Activated CD4-positive, alpha-beta T cell treated with anti-CD3 and anti-CD28 coated beads for 36 hours (primary cell): ENCODE measurements at regions of chr2 and their contacts with region 1.

Region 1: GRCh38 chr2:26345545-26346453 is at the start of gene SELENOI:
- DNase-seq: peak; percentile 100
- ATAC-seq: peak; percentile 94
- H3K4me3 Mint-ChIP-seq: peak within 1 kb of the TSS; percentile 91
- H3K27ac Mint-ChIP-seq: peak within 1 kb of the TSS; percentile 98
- H3K4me1 Mint-ChIP-seq: peaks cover 36% of the 10 kb centered on the region
- H3K27me3 Mint-ChIP-seq: no peaks in the 10 kb centered on the region
- total RNA-seq, gene SELENOI: 26.5 to 42.3 TPM

Region 2: DNA sequence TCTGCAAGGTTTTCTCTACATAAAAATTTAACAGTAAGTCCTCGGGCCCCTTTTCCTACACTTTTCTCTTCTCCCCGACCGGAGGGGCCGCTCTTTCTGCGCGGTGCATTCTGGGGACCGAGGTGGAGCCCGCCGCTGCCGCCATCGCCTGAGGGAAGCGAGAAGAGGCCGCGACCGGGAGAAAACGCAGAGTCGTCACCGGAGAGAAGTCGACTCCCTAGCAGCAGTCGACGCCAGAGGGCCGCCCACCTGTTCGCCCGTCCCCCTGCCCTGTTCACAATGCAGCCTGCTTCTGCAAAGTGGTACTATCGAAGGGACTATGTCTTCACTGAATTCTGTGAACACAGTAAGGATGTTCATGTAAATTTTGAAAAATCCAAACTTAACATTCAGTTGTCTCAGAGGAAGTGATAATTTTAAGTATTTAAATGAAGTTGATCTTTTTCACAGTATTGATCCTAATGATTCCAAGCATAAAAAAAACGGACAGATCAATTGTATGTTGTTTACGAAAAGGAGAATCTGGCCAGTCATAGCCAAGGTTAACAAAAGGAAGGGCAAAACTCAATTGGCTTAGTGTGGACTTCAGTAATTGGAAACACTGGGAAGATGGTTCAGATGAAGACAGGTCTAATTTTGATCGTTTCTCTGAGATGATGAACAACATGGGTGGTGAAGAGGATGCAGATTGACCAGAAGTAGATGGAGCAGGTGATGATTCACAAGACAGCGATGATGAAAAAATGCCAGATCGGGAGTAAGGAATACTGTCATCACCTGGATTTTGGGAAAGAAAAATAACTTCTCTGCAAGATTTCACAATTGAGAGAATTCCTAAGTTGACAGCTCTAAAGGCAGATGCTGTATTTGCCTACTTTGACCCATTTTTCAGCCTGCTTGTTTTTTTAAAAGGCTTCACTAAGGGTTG is 523.3 kb before region 1 on chr2:
- CTCF ChIA-PET with region 1: no interaction called
- POLR2A ChIA-PET with region 1: no interaction called
- intact Hi-C with region 1: loop called in 1 of 2 experiments (anchors 1 kb)
- DNase-seq: peak; percentile 82
- ATAC-seq: peak; percentile 34
- H3K4me3 Mint-ChIP-seq: peak overlapping the region; percentile 72
- H3K27ac Mint-ChIP-seq: peak overlapping the region; percentile 79
- H3K4me1 Mint-ChIP-seq: peaks cover 69% of the 10 kb centered on the region
- H3K27me3 Mint-ChIP-seq: no peaks in the 10 kb centered on the region

Region 3: GRCh38 chr2:26033818-26034636 is 311.8 kb before region 1 on chr2 and contains the start of gene RAB10:
- CTCF ChIA-PET with region 1: no interaction called
- POLR2A ChIA-PET with region 1: interaction called, 3 read pairs
- intact Hi-C with region 1: loop called (anchors 1 to 5 kb)
- DNase-seq: peak; percentile 99
- ATAC-seq: peak; percentile 95
- H3K4me3 Mint-ChIP-seq: peak within 1 kb of the TSS; percentile 98
- H3K27ac Mint-ChIP-seq: peak within 1 kb of the TSS; percentile 90
- H3K4me1 Mint-ChIP-seq: peaks cover 28% of the 10 kb centered on the region
- H3K27me3 Mint-ChIP-seq: no peaks in the 10 kb centered on the region
- total RNA-seq, gene RAB10: 103 to 160 TPM

Region 4: DNA sequence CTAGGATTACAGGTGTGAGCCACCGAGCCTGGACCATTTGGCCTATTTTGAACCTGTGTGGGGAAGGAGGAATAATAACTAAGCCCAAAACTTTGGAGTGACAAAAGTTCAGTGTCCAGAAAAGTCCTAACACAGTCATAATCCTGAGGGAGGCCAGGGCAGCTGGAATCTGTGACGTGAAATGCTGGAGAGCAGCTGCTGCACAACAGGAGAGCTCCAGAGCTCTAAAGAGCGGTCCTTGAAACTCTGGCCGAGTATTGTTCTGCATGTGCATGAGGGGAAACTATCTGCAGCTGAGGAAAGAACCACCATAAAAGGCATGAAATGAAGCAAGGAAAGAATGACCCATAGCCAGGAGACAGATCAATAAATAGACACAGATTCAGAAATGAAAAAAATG is 129.2 kb before region 1 on chr2:
- CTCF ChIA-PET with region 1: no interaction called
- POLR2A ChIA-PET with region 1: no interaction called
- intact Hi-C with region 1: no loop called
- DNase-seq: no peak
- ATAC-seq: no peak
- H3K4me3 Mint-ChIP-seq: no peak overlapping the region
- H3K27ac Mint-ChIP-seq: no peak overlapping the region
- H3K4me1 Mint-ChIP-seq: no peaks in the 10 kb centered on the region
- H3K27me3 Mint-ChIP-seq: no peaks in the 10 kb centered on the region

Region 5: GRCh38 chr2:26299471-26300101 is 46.2 kb before region 1 on chr2:
- CTCF ChIA-PET with region 1: no interaction called
- POLR2A ChIA-PET with region 1: interaction called, 4 read pairs
- intact Hi-C with region 1: loop called in 1 of 2 experiments (anchors 1 kb)
- DNase-seq: peak; percentile 51
- ATAC-seq: peak; percentile 56
- H3K4me3 Mint-ChIP-seq: no peak overlapping the region
- H3K27ac Mint-ChIP-seq: no peak overlapping the region
- H3K4me1 Mint-ChIP-seq: no peaks in the 10 kb centered on the region
- H3K27me3 Mint-ChIP-seq: no peaks in the 10 kb centered on the region

Region 6: DNA sequence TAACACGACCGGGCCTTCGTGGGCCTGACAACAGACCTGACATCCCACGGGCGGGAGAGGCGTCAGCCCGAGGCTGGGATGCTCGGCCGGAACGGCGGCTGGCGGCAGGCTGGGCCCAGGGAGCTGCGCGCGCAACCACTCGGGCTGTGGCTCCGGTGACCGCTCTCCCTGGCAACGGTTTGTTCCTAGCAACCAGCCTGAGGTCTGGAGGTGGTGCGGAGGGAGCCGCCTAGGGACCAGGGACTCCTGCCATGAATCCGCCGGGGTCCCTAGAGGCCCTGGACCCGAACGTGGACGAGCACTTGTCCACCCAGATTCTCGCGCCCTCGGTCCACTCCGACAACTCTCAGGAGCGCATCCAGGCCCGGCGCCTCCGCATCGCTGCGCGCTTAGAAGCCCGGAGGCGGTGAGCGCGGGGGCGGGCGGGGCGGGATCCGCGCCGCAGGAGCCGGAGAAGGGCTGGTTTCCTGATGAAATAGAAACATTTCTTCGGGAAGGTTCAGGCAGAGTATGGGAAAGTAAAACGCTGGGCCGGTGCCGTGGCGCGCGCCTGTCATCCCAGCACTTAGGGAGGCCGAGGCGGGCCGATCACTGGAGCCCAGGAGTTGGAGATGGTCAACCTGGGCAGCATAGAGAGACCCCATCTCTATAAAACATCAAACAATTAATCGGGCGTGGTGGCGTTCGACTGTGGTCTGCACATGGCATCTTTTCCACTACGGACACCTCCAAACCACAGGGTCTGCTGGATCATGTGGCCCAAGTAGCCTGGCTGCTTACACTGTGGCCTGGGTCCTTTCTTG is 56.1 kb after region 1 on chr2 and contains the start of gene DRC1:
- CTCF ChIA-PET with region 1: no interaction called
- POLR2A ChIA-PET with region 1: no interaction called
- intact Hi-C with region 1: no loop called
- DNase-seq: peak; percentile 64
- ATAC-seq: peak; percentile 62
- H3K4me3 Mint-ChIP-seq: no peak within 1 kb of the TSS
- H3K27ac Mint-ChIP-seq: no peak within 1 kb of the TSS
- H3K4me1 Mint-ChIP-seq: peaks cover 8% of the 10 kb centered on the region
- H3K27me3 Mint-ChIP-seq: peaks cover 13% of the 10 kb centered on the region
- total RNA-seq, gene DRC1: not detected

Region 7: GRCh38 chr2:26764078-26764887 is 418.5 kb after region 1 on chr2 and contains the start of gene SLC35F6:
- CTCF ChIA-PET with region 1: no interaction called
- POLR2A ChIA-PET with region 1: no interaction called
- intact Hi-C with region 1: loop called in 1 of 2 experiments (anchors 1 kb)
- DNase-seq: peak; percentile 91
- ATAC-seq: peak; percentile 95
- H3K4me3 Mint-ChIP-seq: peak within 1 kb of the TSS; percentile 85
- H3K27ac Mint-ChIP-seq: peak within 1 kb of the TSS; percentile 78
- H3K4me1 Mint-ChIP-seq: peaks cover 36% of the 10 kb centered on the region
- H3K27me3 Mint-ChIP-seq: no peaks in the 10 kb centered on the region
- total RNA-seq, gene SLC35F6: 5.0 to 5.6 TPM

Region 8: GRCh38 chr2:27217217-27218121 is 871.7 kb after region 1 on chr2 and contains the start of gene CAD:
- CTCF ChIA-PET with region 1: no interaction called
- POLR2A ChIA-PET with region 1: no interaction called
- intact Hi-C with region 1: loop called in 1 of 2 experiments (anchors 2 kb)
- DNase-seq: peak; percentile 94
- ATAC-seq: peak; percentile 90
- H3K4me3 Mint-ChIP-seq: peak within 1 kb of the TSS; percentile 93
- H3K27ac Mint-ChIP-seq: peak within 1 kb of the TSS; percentile 87
- H3K4me1 Mint-ChIP-seq: peaks cover 37% of the 10 kb centered on the region
- H3K27me3 Mint-ChIP-seq: no peaks in the 10 kb centered on the region
- total RNA-seq, gene CAD: 107 to 147 TPM